Panc1 (cell line): ENCODE measurements at regions of chr10 and their contacts with region 1.

Region 1: GRCh38 chr10:101018600-101019439 is 12.1 kb downstream of the PDZD7 start:
- DNase-seq: no peak
- ATAC-seq: peak; percentile 88
- H3K4me3 ChIP-seq: no peak overlapping the region
- H3K27ac ChIP-seq: no peak overlapping the region
- H3K4me1 ChIP-seq: peaks cover 2% of the 10 kb centered on the region; the same call in 1 of the 2 replicates
- H3K27me3 ChIP-seq: no peaks in the 10 kb centered on the region
- CTCF ChIP-seq: peak; percentile 97

Region 2: GRCh38 chr10:101031128-101031795 is 12.4 kb after region 1 on chr10 and contains the starts of genes PDZD7 and SFXN3:
- CTCF ChIA-PET with region 1: interaction called, 22 read pairs
- POLR2A ChIA-PET with region 1: interaction called, 6 read pairs
- in situ Hi-C with region 1: no loop called
- intact Hi-C with region 1: no loop called
- DNase-seq: no peak
- ATAC-seq: peak; percentile 93
- H3K4me3 ChIP-seq: peak within 1 kb of the TSS; percentile 69 to 94
- H3K27ac ChIP-seq: no peak within 1 kb of the TSS; the same call in 1 of the 2 replicates
- H3K4me1 ChIP-seq: peaks cover 20% of the 10 kb centered on the region
- H3K27me3 ChIP-seq: no peaks in the 10 kb centered on the region
- CTCF ChIP-seq: no peak
- total RNA-seq, gene PDZD7: 1.8 TPM
- total RNA-seq, gene SFXN3: 15.3 TPM

Region 3: DNA sequence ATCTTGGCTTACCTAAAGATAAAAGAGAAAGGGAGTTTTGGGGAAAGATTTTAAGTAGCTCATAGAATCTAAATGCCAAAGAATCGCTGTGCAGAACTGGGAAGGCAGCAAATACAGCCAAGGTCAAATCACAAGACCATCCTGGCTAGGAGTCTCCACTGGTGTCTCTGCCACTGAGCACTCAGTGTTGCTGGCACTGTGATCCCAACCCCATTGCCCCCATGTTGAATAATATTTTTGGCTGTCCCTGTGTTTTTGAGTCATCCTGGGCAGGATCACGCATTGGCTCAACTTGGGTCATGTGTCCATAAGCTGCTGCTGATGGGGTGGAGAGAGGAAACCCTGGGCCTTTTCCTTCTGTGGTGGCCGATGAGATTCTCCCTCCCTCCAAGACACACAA is 133.5 kb after region 1 on chr10:
- CTCF ChIA-PET with region 1: no interaction called
- POLR2A ChIA-PET with region 1: no interaction called
- in situ Hi-C with region 1: no loop called
- intact Hi-C with region 1: no loop called
- DNase-seq: no peak
- ATAC-seq: no peak
- H3K4me3 ChIP-seq: no peak overlapping the region
- H3K27ac ChIP-seq: no peak overlapping the region
- H3K4me1 ChIP-seq: no peaks in the 10 kb centered on the region
- H3K27me3 ChIP-seq: peaks cover 23% of the 10 kb centered on the region
- CTCF ChIP-seq: no peak

Region 4: DNA sequence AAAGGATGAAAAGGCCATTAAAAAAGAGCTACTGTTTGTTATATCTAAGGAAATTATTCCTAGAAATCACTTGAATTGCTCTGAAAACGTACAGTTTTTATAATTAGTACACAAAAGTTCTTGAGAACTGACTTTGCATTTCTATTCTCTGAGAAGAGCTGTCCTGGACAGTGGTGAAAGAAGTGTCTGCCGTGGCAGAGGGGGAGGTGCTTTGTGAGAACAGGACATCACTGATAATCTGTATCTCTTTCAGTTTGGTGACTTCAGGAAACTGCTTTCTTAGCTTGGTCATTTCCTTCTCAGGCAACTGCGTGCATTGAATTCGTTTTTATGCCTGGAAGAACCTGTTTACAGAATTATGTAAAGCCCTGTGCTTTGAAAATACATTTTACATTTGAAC is 517.1 kb after region 1 on chr10:
- CTCF ChIA-PET with region 1: no interaction called
- POLR2A ChIA-PET with region 1: no interaction called
- in situ Hi-C with region 1: no loop called
- intact Hi-C with region 1: no loop called
- DNase-seq: no peak
- ATAC-seq: no peak
- H3K4me3 ChIP-seq: no peak overlapping the region
- H3K27ac ChIP-seq: no peak overlapping the region
- H3K4me1 ChIP-seq: no peaks in the 10 kb centered on the region
- H3K27me3 ChIP-seq: no peaks in the 10 kb centered on the region
- CTCF ChIP-seq: no peak